ENCODE measurements at regions of chr13 and their contacts with region 1.

Region 1: GRCh38 chr13:29564818-29565217 is 30.7 kb downstream of the SLC7A1 start:
- DNase-seq: no peak
- H3K4me3 Mint-ChIP-seq: no peak overlapping the region
- H3K27ac Mint-ChIP-seq: no peak overlapping the region
- H3K4me1 Mint-ChIP-seq: peaks cover 52% of the 10 kb centered on the region
- H3K27me3 Mint-ChIP-seq: no peaks in the 10 kb centered on the region
- CTCF ChIP-seq: peak; percentile 7

Region 2: DNA sequence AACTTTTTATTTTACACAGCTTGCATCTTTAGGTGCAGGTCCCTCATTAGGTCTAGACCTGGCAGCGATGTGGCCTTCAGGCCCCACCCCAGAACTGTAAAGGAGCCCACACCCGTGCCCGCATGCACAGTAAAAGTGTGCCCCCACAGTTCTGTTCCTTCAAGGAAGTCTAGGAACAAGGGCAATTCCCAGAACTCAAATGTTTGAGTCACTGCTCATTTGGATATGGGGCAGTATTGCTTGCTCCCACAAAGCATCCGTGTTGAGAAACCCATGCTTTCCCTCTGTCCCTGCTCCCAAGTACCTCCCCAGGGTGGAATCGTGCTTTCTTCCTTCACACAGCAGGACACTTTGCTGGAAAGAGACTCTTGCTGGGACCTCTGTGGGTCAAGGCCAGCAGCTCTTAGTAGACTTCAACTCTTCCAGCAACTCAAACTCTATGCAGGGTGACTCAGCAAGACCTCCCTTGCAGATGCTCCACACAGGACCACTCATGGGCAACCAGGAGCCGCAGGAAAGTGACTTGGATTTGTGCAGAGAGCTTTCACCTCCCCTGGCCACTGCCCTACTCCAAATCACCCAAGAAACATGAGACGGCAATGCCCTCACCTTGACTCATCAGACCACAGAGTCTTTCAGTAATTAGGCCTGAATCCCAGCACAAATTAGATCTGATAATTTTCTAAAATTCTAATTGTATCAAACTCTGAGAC is 18.4 kb after region 1 on chr13:
- CTCF ChIA-PET with region 1: interaction called, 3 read pairs
- POLR2A ChIA-PET with region 1: interaction called, 55 read pairs
- intact Hi-C with region 1: no loop called
- DNase-seq: peak; percentile 62
- H3K4me3 Mint-ChIP-seq: peak overlapping the region; percentile 29
- H3K27ac Mint-ChIP-seq: peak overlapping the region; percentile 33
- H3K4me1 Mint-ChIP-seq: peaks cover 46% of the 10 kb centered on the region
- H3K27me3 Mint-ChIP-seq: no peaks in the 10 kb centered on the region
- CTCF ChIP-seq: no peak

Region 3: DNA sequence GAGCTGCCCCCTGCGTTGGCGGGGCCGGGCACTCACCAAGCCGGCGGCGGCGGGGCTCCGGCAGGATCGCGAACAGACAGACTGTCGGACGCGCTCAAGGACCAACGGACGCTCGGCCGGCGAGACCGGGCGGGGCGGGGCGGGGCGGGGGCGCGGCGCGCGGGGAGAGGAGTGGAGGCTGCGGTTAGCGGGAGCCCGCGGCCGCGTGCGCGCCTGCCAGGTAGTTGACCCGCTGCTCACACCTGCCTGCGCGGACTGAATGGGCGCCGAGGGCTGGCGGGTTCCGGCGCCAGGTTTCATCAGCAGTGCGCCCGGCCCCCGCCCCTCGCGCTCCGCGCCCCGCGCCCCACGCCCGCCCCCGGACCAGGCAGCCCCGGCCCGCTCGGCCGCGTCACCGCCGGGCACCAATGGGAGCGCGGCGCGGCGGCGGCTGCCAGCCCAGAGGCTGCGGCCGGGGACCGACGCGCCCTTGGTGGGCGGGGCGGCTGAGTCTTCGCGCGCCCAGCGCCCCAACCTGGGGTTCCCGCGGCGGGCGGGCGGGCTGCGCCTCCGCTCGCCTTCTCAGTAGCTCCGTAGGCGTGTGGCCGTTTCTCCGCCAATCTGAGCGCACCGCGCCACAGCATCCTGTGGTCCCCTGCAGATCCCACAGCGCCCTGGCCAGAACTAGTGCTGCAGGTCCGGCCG is 30.7 kb after region 1 on chr13 and contains the start of gene SLC7A1:
- CTCF ChIA-PET with region 1: interaction called, 9 read pairs
- POLR2A ChIA-PET with region 1: interaction called, 54 read pairs
- intact Hi-C with region 1: no loop called
- DNase-seq: peak; percentile 83
- H3K4me3 Mint-ChIP-seq: peak within 1 kb of the TSS; percentile 86
- H3K27ac Mint-ChIP-seq: peak within 1 kb of the TSS; percentile 94
- H3K4me1 Mint-ChIP-seq: peaks cover 32% of the 10 kb centered on the region
- H3K27me3 Mint-ChIP-seq: no peaks in the 10 kb centered on the region
- CTCF ChIP-seq: no peak
- total RNA-seq, gene SLC7A1: 154 and 194 TPM in 2 replicates

Region 4: GRCh38 chr13:29676941-29677452 is 112.2 kb after region 1 on chr13:
- CTCF ChIA-PET with region 1: interaction called, 6 read pairs
- POLR2A ChIA-PET with region 1: interaction called, 10 read pairs
- intact Hi-C with region 1: no loop called
- DNase-seq: peak; percentile 55
- H3K4me3 Mint-ChIP-seq: peak overlapping the region; percentile 64
- H3K27ac Mint-ChIP-seq: peak overlapping the region; percentile 31
- H3K4me1 Mint-ChIP-seq: peaks cover 15% of the 10 kb centered on the region
- H3K27me3 Mint-ChIP-seq: peaks cover 9% of the 10 kb centered on the region
- CTCF ChIP-seq: no peak

Region 5: DNA sequence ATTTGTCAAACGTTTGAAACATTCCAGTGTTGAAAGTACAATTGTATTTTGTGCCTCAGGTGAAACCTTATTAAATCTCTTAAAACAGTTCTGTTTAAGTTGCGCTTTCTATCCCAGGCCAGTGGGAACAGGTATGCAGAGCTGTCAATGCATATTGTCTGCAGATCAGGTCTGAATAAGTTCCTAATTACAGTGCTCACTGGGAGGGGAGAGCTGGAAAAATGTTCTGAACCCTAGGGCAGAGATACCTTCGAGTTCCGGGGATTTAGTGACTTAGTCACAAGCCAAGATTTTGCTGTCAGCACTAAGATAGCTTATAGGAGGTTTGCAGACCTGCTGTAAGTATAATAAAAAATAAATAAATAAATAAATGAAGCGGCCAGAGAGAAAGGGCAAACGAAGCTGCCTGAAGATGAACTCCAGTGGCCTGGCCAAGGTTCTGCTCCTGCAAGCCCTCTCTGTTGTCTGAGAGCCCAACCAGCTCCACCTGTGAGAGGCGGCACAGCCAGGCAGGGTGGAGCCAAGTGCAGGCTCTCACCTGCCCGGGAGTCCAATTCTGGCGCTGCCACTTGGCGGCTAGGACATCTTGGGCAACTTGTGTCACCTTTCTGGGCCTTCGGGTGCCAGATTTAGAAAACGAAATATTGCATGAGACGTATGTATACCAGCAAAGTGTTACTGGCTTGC is 128.6 kb after region 1 on chr13:
- CTCF ChIA-PET with region 1: interaction called, 3 read pairs
- POLR2A ChIA-PET with region 1: interaction called, 10 read pairs
- intact Hi-C with region 1: no loop called
- DNase-seq: peak; percentile 85
- H3K4me3 Mint-ChIP-seq: no peak overlapping the region
- H3K27ac Mint-ChIP-seq: no peak overlapping the region
- H3K4me1 Mint-ChIP-seq: peaks cover 5% of the 10 kb centered on the region
- H3K27me3 Mint-ChIP-seq: no peaks in the 10 kb centered on the region
- CTCF ChIP-seq: no peak

Region 6: GRCh38 chr13:29707876-29708543 is 143.2 kb after region 1 on chr13:
- CTCF ChIA-PET with region 1: interaction called, 12 read pairs
- POLR2A ChIA-PET with region 1: interaction called, 6 read pairs
- intact Hi-C with region 1: no loop called
- DNase-seq: peak; percentile 62
- H3K4me3 Mint-ChIP-seq: no peak overlapping the region
- H3K27ac Mint-ChIP-seq: no peak overlapping the region
- H3K4me1 Mint-ChIP-seq: peaks cover 6% of the 10 kb centered on the region
- H3K27me3 Mint-ChIP-seq: peaks cover 41% of the 10 kb centered on the region
- CTCF ChIP-seq: peak; percentile 78

Region 7: DNA sequence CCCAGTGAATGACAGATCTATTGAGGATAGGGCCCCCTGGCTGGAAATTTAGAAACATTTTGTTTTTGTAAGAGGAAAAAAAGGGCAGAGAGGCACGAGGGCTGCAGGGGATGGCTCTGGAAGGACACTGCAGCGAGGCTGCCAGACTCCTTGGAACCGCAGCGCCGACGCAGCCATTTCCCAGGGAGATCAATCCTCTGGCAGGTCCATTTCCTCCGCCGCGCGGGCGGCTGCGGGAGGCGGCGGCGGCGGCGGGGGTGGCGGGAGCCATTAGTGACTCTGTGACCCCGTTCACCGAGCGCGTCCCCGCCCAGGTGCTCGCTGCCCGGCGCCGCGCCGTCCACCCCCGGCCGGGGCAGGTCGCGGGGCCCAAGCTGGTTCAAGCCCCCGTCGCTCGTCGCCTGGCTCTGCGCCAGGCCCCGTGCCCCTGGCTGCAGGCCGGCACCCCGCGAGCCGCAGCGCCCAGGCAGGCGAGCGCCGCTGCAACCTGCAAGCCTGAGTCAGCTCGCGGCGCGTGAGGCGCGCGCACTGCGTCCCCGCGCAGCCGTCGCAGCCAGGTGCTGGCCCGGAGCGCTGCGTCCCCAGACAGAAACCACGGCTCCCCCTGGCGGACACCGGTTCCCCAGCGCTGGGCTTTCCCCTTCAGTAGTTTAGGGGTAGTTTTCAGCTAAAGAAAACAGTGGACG is 549.9 kb after region 1 on chr13:
- CTCF ChIA-PET with region 1: interaction called, 5 read pairs
- POLR2A ChIA-PET with region 1: interaction called, 3 read pairs
- intact Hi-C with region 1: loop called (anchors 10 kb)
- DNase-seq: peak; percentile 83
- H3K4me3 Mint-ChIP-seq: peak overlapping the region; percentile 72
- H3K27ac Mint-ChIP-seq: no peak overlapping the region
- H3K4me1 Mint-ChIP-seq: peaks cover 24% of the 10 kb centered on the region
- H3K27me3 Mint-ChIP-seq: no peaks in the 10 kb centered on the region
- CTCF ChIP-seq: peak; percentile 90

Measured in MCF 10A (cell line).